ENCODE measurements at regions of chrX and their contacts with region 1.

Region 1: GRCh38 chrX:132631579-132632232 is 142.9 kb upstream of the MBNL3 start:
- DNase-seq: no peak
- H3K4me3 Mint-ChIP-seq: no peak overlapping the region
- H3K27ac Mint-ChIP-seq: no peak overlapping the region
- H3K4me1 Mint-ChIP-seq: no peaks in the 10 kb centered on the region
- H3K27me3 Mint-ChIP-seq: peaks cover 2% of the 10 kb centered on the region

Region 2: DNA sequence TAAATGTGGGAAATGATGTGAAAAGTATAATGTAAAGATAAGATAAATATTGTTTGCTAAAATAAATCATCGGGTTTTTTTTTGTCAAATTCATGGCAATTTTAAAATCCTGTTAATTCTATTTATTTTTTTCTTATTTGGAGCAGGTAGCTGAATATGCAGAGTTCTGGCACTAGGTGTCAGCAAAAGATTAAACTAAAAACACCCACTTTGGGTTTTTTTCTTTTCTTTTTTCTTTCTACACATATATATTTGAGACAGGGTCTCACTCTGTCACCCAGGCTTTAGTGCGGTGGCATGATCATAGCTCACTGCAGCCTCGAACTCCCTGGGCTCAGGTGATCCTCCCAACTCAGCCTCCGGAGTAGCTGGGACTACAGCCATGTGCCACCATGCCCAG is 405.5 kb before region 1 on chrX:
- intact Hi-C with region 1: loop called (anchors 1 kb)
- DNase-seq: no peak
- H3K4me3 Mint-ChIP-seq: no peak overlapping the region
- H3K27ac Mint-ChIP-seq: no peak overlapping the region
- H3K4me1 Mint-ChIP-seq: no peaks in the 10 kb centered on the region
- H3K27me3 Mint-ChIP-seq: peaks cover 3% of the 10 kb centered on the region

Region 3: GRCh38 chrX:132292793-132293192 is 338.9 kb before region 1 on chrX:
- intact Hi-C with region 1: loop called (anchors 1 kb)
- DNase-seq: peak; percentile 0
- H3K4me3 Mint-ChIP-seq: no peak overlapping the region
- H3K27ac Mint-ChIP-seq: no peak overlapping the region
- H3K4me1 Mint-ChIP-seq: no peaks in the 10 kb centered on the region
- H3K27me3 Mint-ChIP-seq: no peaks in the 10 kb centered on the region

Region 4: GRCh38 chrX:133171962-133172708 is 540.4 kb after region 1 on chrX:
- intact Hi-C with region 1: loop called (anchors 5 kb)
- DNase-seq: no peak
- H3K4me3 Mint-ChIP-seq: no peak overlapping the region
- H3K27ac Mint-ChIP-seq: no peak overlapping the region
- H3K4me1 Mint-ChIP-seq: no peaks in the 10 kb centered on the region
- H3K27me3 Mint-ChIP-seq: peaks cover 2% of the 10 kb centered on the region

Region 5: DNA sequence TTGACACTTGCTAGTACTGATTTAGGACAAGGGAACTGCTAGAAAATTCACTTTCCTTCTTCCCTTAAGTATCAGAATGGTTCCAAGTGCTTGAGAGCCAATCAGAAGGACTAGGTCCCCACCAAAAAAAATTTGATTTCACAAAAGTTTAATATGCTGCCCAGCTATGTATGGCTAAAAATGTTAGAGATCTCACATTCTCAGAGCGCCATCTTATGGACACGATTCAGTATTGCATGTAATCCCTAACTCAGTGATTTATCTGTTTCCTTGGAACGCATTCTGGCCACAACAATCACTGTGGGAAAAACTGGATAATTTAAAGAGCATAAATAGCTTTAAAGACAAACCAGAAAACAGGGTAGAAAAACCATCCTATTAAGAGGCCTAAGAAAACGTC is 1038.7 kb after region 1 on chrX:
- intact Hi-C with region 1: loop called (anchors 10 kb)
- DNase-seq: no peak
- H3K4me3 Mint-ChIP-seq: no peak overlapping the region
- H3K27ac Mint-ChIP-seq: no peak overlapping the region
- H3K4me1 Mint-ChIP-seq: no peaks in the 10 kb centered on the region
- H3K27me3 Mint-ChIP-seq: no peaks in the 10 kb centered on the region